RWPE1 (cell line): ENCODE measurements at regions of chr3 and their contacts with region 1.

Region 1: DNA sequence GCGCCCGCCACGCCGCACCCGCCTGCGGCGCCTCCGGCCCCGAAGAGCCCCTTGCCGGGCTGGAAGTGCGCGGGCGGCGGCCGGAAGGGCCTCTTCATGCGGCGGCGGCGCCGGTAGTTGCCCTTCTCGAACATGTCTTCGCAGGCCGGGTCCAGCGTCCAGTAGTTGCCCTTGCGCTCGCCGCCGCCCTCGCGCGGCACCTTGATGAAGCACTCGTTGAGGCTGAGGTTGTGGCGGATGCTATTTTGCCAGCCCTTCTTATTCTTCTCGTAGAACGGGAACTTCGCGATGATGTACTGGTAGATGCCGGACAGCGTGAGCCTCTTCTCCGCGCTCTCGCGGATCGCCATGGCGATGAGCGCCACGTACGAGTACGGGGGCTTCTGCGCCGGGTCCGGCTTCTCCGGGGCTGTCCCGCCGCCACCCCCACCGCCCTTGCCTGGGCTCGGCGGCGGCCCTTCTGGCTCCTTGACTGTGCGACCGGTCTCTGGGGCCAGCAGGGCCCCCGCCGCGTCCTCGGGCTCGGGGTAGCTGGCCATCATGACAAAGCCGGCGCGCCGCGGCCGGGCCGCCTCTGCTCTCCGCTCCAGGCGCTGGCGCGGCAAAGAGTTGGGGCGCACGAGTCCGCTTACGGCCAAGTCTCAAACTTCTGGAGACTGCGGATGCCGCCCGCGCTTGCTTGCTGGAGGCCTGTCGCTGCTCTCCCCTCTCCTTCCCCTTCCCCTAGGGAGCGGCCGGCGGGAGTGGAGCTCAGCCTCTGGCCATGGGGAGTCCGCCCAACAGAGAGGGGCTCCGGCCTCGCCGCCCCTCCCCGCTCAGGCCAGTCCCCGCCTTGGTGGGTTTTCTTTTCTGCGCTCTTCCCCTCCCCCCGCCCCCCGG is 517 bp downstream of the FOXL2 start:
- DNase-seq: no peak
- H3K27ac ChIP-seq: no peak overlapping the region
- CTCF ChIP-seq: peak; percentile 19

Region 2: GRCh38 chr3:138935848-138936740 is 10.3 kb before region 1 on chr3:
- CTCF ChIA-PET with region 1: interaction called, 11 read pairs
- POLR2A ChIA-PET with region 1: no interaction called
- DNase-seq: peak; percentile 75
- H3K27ac ChIP-seq: no peak overlapping the region
- CTCF ChIP-seq: peak; percentile 86

Region 3: DNA sequence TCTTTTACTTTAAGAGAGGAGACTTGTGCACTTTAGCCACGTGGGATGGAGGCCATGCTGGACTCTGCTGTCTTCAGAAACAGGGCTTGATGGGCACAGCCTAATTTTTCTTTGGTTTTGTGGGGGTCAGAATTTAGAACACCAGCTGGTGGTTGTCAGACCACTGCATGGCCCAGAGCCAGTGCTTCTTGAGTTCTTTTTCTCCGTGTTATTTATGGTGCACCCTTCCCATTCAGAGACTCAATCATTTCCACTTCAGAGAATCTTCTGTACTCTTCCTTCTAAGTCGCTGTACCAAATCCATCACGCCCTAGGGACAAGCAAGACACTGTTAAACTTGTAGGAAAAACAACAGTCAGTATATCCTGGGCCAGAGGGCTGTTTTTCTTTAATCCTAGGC is 39.5 kb after region 1 on chr3:
- CTCF ChIA-PET with region 1: no interaction called
- POLR2A ChIA-PET with region 1: no interaction called
- DNase-seq: no peak
- H3K27ac ChIP-seq: no peak overlapping the region
- CTCF ChIP-seq: no peak